B cell (primary cell): ENCODE measurements at regions of chr4 and their contacts with region 1.

Region 1: DNA sequence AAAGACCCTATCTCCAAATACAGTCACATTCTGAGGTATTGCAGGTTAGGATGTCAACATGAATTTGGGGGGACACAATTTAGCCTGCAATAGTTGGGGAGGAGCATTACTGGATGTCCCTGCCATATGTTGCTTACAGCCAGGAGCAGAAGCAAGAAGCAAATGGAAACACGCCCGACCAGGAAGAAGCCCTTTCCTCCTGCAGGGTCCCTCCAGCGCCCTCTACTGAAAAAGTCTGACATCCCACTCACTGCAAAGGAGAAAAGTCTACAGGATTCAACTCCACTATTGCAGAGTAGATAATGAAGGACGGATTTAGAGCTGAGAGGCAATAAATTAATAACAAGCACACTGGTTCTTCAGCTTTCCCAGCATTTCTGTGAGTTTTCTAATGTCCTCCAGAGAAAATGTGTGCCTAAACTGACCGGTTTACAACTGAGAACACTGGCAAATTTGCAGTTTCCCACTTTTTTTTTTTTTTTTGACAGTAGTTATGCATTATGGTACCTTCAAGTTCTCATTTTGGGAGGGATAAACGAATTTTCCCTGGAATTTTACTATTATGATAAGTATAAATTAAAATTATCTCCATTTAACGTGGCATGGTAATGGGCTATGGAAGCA is 31.7 kb downstream of the COQ2 start:
- DNase-seq: peak; percentile 82
- ATAC-seq: peak; percentile 69
- H3K4me3 ChIP-seq: no peak overlapping the region
- H3K4me3 Mint-ChIP-seq: no peak overlapping the region
- H3K27ac ChIP-seq: peak overlapping the region in 1 of 2 donors; percentile 3
- H3K27ac Mint-ChIP-seq: peak overlapping the region; percentile 65
- H3K4me1 ChIP-seq: peaks cover 46 to 49% of the 10 kb centered on the region in 2 donors
- H3K4me1 Mint-ChIP-seq: peaks cover 53% of the 10 kb centered on the region
- H3K27me3 ChIP-seq: no peaks in the 10 kb centered on the region
- H3K27me3 Mint-ChIP-seq: no peaks in the 10 kb centered on the region
- CTCF ChIP-seq: peak; percentile 85

Region 2: DNA sequence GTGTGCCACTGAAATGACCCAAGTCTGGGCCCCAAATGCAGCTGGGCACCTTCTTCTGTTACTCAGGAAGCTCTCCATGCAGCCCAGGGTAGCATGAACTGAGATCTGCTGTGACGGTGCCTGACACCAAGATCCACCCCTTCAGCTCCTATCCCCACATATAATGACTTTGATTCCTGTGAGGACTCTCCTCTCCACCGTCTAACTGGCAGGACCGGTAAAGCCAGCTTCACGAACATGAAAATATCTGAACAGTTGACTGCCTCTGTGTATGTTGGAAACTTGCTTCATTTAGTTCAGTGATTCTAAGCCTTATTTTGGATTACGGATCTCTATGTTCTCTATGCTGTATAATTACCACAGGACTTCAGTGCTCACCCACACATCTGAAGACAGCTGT is 575.6 kb before region 1 on chr4:
- CTCF ChIA-PET with region 1: no interaction called
- POLR2A ChIA-PET with region 1: no interaction called
- intact Hi-C with region 1: no loop called
- DNase-seq: no peak
- ATAC-seq: no peak
- H3K4me3 ChIP-seq: no peak overlapping the region
- H3K4me3 Mint-ChIP-seq: no peak overlapping the region
- H3K27ac ChIP-seq: no peak overlapping the region
- H3K27ac Mint-ChIP-seq: no peak overlapping the region
- H3K4me1 ChIP-seq: no peaks in the 10 kb centered on the region
- H3K4me1 Mint-ChIP-seq: no peaks in the 10 kb centered on the region
- H3K27me3 ChIP-seq: no peaks in the 10 kb centered on the region
- H3K27me3 Mint-ChIP-seq: peaks cover 3% of the 10 kb centered on the region
- CTCF ChIP-seq: no peak

Region 3: DNA sequence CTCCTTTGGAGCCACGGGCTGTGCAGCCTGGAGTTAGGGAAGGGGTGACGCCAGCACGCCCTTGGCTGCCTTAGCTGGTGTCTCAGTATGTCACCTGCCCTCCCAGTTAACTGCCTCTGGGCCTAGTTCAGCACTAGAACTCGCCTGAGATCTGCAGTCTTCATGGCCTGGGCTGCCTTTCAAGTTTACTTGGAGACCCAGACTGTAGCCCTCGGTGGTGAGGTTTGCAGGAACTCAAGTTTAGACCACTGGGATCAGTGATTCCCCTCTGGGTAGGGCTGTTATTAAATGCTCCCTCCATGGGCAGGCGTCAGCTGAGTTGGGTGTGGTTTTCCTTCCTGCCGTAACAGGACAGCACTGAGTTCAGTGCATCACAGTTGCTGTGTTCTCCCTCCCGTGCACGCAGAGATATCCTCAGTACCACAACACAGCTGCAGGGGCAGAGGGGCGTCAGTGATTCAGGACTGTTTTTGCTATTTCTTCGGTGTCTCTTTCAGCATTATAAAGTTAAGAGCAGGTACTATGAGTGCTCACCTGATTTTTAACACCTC is 168.9 kb before region 1 on chr4:
- CTCF ChIA-PET with region 1: interaction called, 21 read pairs
- POLR2A ChIA-PET with region 1: interaction called, 7 read pairs
- intact Hi-C with region 1: no loop called
- DNase-seq: peak; percentile 83
- ATAC-seq: peak; percentile 98
- H3K4me3 ChIP-seq: peak overlapping the region in 2 of 5 experiments; percentile 15 to 32
- H3K4me3 Mint-ChIP-seq: peak overlapping the region; percentile 50
- H3K27ac ChIP-seq: peak overlapping the region; percentile 77 to 93
- H3K27ac Mint-ChIP-seq: peak overlapping the region; percentile 92
- H3K4me1 ChIP-seq: peaks cover 26 to 37% of the 10 kb centered on the region in 2 donors
- H3K4me1 Mint-ChIP-seq: peaks cover 44% of the 10 kb centered on the region
- H3K27me3 ChIP-seq: no peaks in the 10 kb centered on the region
- H3K27me3 Mint-ChIP-seq: no peaks in the 10 kb centered on the region
- CTCF ChIP-seq: peak; percentile 58

Region 4: DNA sequence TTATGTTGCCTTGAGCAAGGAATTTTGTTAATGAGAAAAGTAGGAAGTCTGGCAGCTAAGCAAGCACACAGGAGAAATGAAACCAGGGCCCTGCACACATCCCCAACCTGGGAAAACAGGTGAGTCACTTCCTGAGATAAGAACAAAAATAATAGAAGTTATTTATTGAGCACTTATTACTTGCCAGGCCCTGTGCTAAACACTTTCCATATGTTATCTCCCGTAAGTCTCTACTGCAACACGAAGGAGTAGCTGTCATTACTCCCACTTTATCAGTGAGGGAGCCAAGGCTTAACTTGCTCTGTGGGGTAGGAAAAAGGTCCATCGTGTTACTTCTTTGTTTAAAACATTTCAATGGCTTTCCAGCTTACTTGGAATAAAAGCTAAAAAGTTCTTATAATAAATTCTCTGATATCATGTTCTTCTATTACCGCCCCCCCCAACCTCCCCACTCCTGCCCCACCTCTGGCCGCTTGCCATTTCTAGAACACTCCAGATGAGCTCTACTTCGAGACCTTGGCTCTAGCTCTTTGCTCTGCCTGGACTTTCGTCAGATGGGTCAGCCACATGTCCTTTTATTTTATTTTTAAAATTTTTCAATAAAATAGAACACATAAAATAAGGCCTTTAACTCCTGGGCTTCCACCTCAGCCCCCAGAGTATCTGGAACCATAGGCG is 102.1 kb before region 1 on chr4:
- CTCF ChIA-PET with region 1: interaction called, 20 read pairs
- POLR2A ChIA-PET with region 1: no interaction called
- intact Hi-C with region 1: no loop called
- DNase-seq: no peak
- ATAC-seq: no peak
- H3K4me3 ChIP-seq: no peak overlapping the region
- H3K4me3 Mint-ChIP-seq: no peak overlapping the region
- H3K27ac ChIP-seq: no peak overlapping the region
- H3K27ac Mint-ChIP-seq: no peak overlapping the region
- H3K4me1 ChIP-seq: peaks cover 31 to 33% of the 10 kb centered on the region in 2 donors
- H3K4me1 Mint-ChIP-seq: peaks cover 42% of the 10 kb centered on the region
- H3K27me3 ChIP-seq: no peaks in the 10 kb centered on the region
- H3K27me3 Mint-ChIP-seq: no peaks in the 10 kb centered on the region
- CTCF ChIP-seq: no peak

Region 5: DNA sequence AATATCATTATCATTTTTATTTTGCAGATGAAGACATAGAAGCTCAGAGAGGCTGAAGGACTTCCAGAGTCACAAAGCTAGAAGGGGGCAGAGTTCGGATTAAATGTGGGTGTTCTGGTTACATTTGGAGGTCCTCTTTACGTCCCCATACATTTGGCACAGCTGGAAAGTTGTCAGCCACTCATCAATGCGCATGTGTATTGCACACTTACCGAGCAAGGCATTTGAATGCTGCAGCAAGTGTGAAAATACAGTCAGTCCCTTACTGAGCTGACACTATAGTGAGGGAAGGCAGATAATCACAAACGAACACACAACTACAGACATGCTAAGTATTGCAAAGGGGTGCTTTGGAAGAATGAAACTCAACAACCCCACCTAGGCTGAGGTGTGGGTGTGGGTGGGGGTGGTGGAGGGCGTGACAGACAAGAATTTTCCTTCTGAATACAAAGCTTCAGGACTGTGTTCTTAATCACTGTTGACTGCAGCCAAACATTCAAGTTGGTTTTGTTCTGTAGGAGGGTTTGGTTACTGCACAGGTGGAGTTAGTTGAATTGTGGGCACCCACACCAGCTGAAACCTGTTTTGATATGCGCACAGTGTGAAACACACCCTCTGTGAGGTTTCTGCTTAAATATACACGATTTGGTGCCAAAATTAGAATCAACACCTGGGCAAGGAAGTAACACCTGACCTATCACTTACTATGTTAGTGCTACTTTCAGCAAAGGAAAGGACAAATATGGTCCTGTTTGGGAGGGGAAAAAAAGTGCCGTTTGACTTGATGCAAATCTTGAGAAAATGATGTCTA is 40.6 kb before region 1 on chr4:
- CTCF ChIA-PET with region 1: interaction called, 28 read pairs
- POLR2A ChIA-PET with region 1: interaction called, 6 read pairs
- intact Hi-C with region 1: loop called (anchors 1 kb)
- DNase-seq: peak; percentile 86
- ATAC-seq: peak; percentile 87
- H3K4me3 ChIP-seq: peak overlapping the region in 2 of 5 experiments; percentile 2 to 45
- H3K4me3 Mint-ChIP-seq: peak overlapping the region; percentile 66
- H3K27ac ChIP-seq: peak overlapping the region; percentile 71 to 82
- H3K27ac Mint-ChIP-seq: peak overlapping the region; percentile 90
- H3K4me1 ChIP-seq: peaks cover 85 to 87% of the 10 kb centered on the region in 2 donors
- H3K4me1 Mint-ChIP-seq: peaks cover 83% of the 10 kb centered on the region
- H3K27me3 ChIP-seq: no peaks in the 10 kb centered on the region
- H3K27me3 Mint-ChIP-seq: no peaks in the 10 kb centered on the region
- CTCF ChIP-seq: no peak

Region 6: DNA sequence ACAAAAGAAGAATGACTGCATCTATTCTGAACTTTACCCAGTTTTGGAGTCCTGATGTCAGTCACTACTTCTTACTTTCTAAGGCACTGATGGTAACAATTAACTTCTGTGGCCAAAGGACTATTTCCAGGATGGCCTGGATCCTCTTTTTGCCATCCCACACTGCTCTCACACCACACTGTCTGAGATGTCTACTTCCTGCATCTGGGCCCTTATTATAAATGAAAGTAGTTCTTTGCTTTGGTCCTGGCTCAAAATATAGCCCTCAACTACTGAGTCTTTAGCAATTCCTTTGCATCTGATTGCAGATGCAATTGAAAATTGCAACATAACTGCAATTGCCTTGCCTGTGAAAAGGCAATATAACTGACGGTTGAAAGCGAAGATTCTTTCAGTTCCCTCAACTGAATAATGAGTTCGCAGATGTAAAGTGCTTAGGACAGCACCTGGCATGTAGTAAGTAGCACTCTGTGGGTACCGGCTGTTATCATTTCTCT is 12.5 kb before region 1 on chr4:
- CTCF ChIA-PET with region 1: interaction called, 20 read pairs
- POLR2A ChIA-PET with region 1: no interaction called
- intact Hi-C with region 1: loop called (anchors 2 kb)
- DNase-seq: peak; percentile 63
- ATAC-seq: peak; percentile 76
- H3K4me3 ChIP-seq: peak overlapping the region in 2 of 5 experiments; percentile 5 to 20
- H3K4me3 Mint-ChIP-seq: peak overlapping the region; percentile 62
- H3K27ac ChIP-seq: peak overlapping the region; percentile 8 to 57
- H3K27ac Mint-ChIP-seq: peak overlapping the region; percentile 80
- H3K4me1 ChIP-seq: peaks cover 23 to 38% of the 10 kb centered on the region in 2 donors
- H3K4me1 Mint-ChIP-seq: peaks cover 65% of the 10 kb centered on the region
- H3K27me3 ChIP-seq: no peaks in the 10 kb centered on the region
- H3K27me3 Mint-ChIP-seq: no peaks in the 10 kb centered on the region
- CTCF ChIP-seq: no peak